CD8-positive, alpha-beta T cell (primary cell): ENCODE measurements at regions of chr1 and their contacts with region 1.

Region 1: GRCh38 chr1:167297222-167298214 is 76.8 kb downstream of the POU2F1 start:
- DNase-seq: no peak
- ATAC-seq: no peak
- H3K4me3 ChIP-seq: no peak overlapping the region
- H3K4me3 Mint-ChIP-seq: no peak overlapping the region
- H3K27ac ChIP-seq: no peak overlapping the region
- H3K27ac Mint-ChIP-seq: no peak overlapping the region
- H3K4me1 ChIP-seq: no peaks in the 10 kb centered on the region
- H3K4me1 Mint-ChIP-seq: peaks cover 14% of the 10 kb centered on the region
- H3K27me3 ChIP-seq: no peaks in the 10 kb centered on the region
- H3K27me3 Mint-ChIP-seq: no peaks in the 10 kb centered on the region
- CTCF ChIP-seq: no peak

Region 2: DNA sequence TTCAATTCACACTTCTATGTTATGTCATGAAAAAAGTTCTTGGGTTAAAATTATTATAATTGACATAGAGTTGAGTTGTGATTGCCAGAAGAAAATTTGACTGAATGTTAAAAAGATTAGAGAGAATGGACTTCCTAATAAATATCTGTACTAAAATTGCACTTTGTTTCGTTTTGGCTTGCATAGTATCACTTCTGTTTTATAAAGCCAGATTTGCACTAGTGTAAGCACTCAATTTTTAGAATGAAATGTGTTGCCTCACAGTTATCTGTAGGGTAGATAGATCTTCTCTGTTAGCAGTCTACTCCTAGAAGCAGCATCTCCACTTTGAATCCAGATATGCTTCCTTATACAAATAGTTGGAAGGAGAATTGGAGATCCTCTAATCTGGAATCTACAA is 734.5 kb after region 1 on chr1:
- CTCF ChIA-PET with region 1: no interaction called
- POLR2A ChIA-PET with region 1: no interaction called
- intact Hi-C with region 1: loop called in 1 of 2 experiments (anchors 10 kb)
- DNase-seq: no peak
- ATAC-seq: no peak
- H3K4me3 ChIP-seq: no peak overlapping the region
- H3K4me3 Mint-ChIP-seq: no peak overlapping the region
- H3K27ac ChIP-seq: no peak overlapping the region
- H3K27ac Mint-ChIP-seq: no peak overlapping the region
- H3K4me1 ChIP-seq: no peaks in the 10 kb centered on the region
- H3K4me1 Mint-ChIP-seq: no peaks in the 10 kb centered on the region
- H3K27me3 ChIP-seq: no peaks in the 10 kb centered on the region
- H3K27me3 Mint-ChIP-seq: no peaks in the 10 kb centered on the region
- CTCF ChIP-seq: no peak